ENCODE measurements at regions of chr2 and their contacts with region 1.

Region 1: DNA sequence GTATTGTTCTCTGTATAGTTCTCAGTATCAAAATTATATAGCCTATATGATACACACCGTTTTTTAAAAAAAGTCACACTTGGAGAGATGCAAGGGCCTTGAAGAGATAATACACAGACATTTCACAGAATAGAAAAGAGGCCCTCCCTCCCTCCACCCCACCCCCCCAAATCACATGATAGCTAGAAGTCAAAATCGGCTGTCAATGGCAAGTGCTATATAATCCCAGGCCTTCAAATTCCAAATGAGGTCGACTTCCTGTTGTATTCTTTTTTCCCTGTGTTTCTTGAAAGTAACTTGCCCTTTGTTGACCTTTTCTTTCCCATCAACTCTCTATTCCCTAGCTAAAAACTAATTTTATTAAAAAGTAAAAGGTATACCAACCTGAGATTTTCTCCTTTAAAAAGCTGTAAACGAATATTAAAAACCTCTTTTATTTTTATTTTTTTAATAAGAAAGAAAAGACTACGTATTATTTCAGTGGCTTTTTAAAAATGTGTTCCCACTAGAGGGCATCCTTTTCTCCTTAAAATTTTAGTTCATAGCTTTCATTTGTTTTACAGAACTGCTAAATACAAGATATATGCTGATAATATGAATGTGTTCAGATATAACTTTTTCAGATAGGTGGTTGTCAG is 46.6 kb downstream of the KCMF1 start:
- DNase-seq: no peak
- H3K4me3 Mint-ChIP-seq: no peak overlapping the region
- H3K27ac Mint-ChIP-seq: peak overlapping the region; percentile 40
- H3K4me1 Mint-ChIP-seq: peaks cover 50% of the 10 kb centered on the region
- H3K27me3 Mint-ChIP-seq: no peaks in the 10 kb centered on the region

Region 2: DNA sequence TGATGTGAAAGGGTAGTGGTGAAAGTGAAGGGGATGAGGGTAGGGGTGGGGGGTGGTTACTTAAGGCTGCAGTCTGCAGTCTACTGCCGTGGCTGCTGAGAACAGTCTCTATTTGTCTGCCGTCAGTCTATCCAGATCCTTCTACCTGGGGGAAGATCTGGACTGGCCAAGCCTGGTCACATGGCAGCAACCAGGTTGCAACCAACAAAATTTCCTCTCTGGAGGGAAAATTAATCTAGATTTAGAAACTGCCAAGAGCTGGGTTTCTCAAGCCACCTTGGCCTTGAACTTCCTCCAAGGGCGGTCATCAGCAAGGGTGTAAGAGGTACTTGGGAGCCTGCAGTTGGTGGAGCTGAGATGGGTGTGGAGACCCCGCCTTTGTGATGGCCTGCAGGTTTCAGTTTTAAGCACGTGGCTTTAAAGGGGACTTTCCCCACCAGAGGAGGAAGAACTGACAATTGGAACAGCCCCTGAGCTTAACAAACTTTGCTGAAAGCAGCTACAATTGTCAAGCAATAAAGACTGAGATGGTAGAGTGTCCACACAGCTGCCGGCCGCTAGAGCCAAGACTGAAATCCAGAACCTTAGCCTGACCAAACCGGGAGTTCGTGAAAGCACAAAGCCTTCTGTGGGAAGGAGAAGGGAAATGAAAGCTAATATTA is 78.0 kb before region 1 on chr2:
- intact Hi-C with region 1: loop called (anchors 2 kb)
- DNase-seq: peak; percentile 83
- H3K4me3 Mint-ChIP-seq: peak overlapping the region; percentile 74
- H3K27ac Mint-ChIP-seq: peak overlapping the region; percentile 96
- H3K4me1 Mint-ChIP-seq: peaks cover 54% of the 10 kb centered on the region
- H3K27me3 Mint-ChIP-seq: no peaks in the 10 kb centered on the region

Region 3: GRCh38 chr2:84946204-84947009 is 71.1 kb before region 1 on chr2:
- intact Hi-C with region 1: loop called (anchors 1 kb)
- DNase-seq: peak; percentile 63
- H3K4me3 Mint-ChIP-seq: peak overlapping the region; percentile 43
- H3K27ac Mint-ChIP-seq: peak overlapping the region; percentile 91
- H3K4me1 Mint-ChIP-seq: peaks cover 40% of the 10 kb centered on the region
- H3K27me3 Mint-ChIP-seq: no peaks in the 10 kb centered on the region

Region 4: DNA sequence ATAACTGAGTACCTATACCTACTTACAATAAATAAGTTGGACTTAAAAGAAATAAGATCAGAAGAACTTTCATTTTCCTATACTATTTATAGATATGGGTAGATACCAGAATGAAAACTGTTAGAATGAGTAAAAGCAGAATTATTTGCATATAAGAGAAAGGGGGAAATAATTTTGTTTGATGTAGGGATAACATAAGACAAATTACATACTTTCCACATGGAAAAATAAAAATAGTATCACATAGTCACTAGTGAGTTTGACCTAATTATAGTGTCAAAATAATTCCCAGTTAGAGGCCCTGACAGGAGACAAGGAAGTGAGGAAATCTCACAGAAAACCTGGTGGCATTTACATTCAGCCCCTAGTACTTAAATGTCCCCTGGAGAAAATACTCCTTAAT is 18.0 kb before region 1 on chr2:
- intact Hi-C with region 1: loop called (anchors 1 kb)
- DNase-seq: no peak
- H3K4me3 Mint-ChIP-seq: peak overlapping the region; percentile 70
- H3K27ac Mint-ChIP-seq: peak overlapping the region; percentile 96
- H3K4me1 Mint-ChIP-seq: peaks cover 57% of the 10 kb centered on the region
- H3K27me3 Mint-ChIP-seq: no peaks in the 10 kb centered on the region

Region 5: GRCh38 chr2:85106507-85107215 is 89.1 kb after region 1 on chr2:
- intact Hi-C with region 1: no loop called
- DNase-seq: no peak
- H3K4me3 Mint-ChIP-seq: no peak overlapping the region
- H3K27ac Mint-ChIP-seq: no peak overlapping the region
- H3K4me1 Mint-ChIP-seq: no peaks in the 10 kb centered on the region
- H3K27me3 Mint-ChIP-seq: peaks cover 5% of the 10 kb centered on the region

Measured in activated T-helper 1 cell treated with anti-CD3 and anti-CD28 coated beads, Interleukin-12 subunit alpha, Interleukin-12 subunit beta, Interleukin-2, Interleukin-4 antibody, amounts not matched to agents 30 ng/mL and 10 ng/mL and 1 ng/mL, durations not matched to agents 14 hours and 24 hours and 36 hours (primary cell).